ENCODE measurements at regions of chr6 and their contacts with region 1.

Region 1: DNA sequence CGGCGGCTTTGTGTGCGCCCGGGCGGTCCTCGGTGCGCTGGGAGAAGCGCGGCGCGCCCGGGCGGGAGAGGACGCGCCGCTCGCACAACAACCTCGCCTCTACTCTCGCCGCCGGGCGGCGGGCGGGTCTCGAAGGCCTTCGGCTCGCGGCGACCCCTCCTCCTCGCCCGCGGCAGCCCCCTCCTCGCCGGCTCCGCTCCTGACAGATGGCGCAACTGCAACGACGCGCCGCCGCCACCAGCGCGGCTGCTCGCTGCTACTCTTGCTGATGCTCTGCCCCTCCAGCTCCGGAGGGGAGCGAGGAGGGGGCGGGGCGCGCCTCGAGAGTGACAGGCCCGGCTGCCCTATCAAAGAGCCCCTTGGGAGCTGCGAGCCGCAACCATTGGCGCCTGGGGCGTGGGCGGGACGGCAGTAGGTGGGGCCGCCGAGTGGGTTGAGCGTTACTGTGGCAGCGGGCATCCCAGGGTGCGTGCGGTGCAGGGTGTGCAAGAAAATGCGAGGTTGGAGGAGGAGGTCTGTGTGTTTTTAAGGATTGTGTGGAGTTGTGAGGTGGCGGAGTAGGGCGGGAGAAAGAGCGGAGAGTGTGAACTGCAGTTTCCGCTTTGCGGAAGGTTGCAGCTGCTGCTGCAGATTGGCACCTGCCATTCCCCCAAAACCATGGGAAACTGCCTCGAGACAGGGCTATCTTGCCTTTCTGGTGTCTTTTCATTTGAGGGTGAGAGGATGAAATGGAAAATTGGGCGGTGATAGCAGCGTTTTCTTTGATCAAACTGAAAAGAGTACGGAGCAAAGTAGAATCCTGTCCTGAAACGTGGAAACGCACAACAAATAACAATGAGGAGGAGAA is at the start of gene FYN:
- DNase-seq: peak; percentile 97 to 100 (median 99)
- ATAC-seq: peak; percentile 96
- H3K4me3 ChIP-seq: peak within 1 kb of the TSS; percentile 89
- H3K4me3 Mint-ChIP-seq: peak within 1 kb of the TSS; percentile 95 to 100 (median 98)
- H3K27ac ChIP-seq: peak within 1 kb of the TSS; percentile 86
- H3K27ac Mint-ChIP-seq: peak within 1 kb of the TSS; percentile 93 to 99 (median 96)
- H3K4me1 ChIP-seq: peaks cover 32 to 34% of the 10 kb centered on the region in 2 donors
- H3K4me1 Mint-ChIP-seq: peaks cover 22 to 45% (median 38%) of the 10 kb centered on the region in 7 donors
- H3K27me3 ChIP-seq: no peaks in the 10 kb centered on the region
- H3K27me3 Mint-ChIP-seq: no peaks in the 10 kb centered on the region
- total RNA-seq, gene FYN: 200 to 720 (median 447) TPM

Region 2: DNA sequence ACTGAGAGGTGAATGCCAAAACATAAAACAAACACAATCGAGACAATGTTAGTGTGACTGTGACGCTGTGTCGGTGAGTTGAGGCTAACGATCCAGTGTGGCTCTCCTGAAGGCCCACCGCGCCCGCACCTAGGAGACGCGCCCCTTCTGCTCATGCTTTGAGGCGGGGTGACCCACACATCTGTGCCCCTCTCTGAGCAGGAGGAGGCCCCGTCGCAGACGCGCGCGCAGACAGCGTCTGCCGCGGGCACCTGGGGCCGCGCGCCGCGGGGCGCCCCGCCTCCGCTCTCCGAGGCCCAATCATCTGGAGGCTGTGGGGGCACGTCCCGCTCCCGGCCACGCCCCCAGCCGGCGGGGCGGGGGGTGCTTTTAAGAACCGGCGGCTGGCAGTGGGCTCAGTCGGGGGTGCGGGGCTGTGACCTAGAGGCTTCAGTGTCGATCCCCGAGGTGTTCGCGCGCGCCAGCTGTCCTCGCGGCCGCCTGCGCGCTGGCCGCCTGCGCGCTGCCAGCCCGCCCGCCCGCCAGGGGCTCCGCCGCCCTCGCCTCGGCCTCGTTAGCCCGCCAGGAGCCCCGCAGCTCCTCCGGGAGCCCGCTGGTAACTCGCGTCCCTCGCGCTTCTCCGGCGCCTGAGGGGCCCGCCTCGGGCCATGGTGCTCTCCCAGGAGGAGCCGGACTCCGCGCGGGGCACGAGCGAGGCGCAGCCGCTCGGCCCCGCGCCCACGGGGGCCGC is 786.1 kb before region 1 on chr6 and contains the start of gene SLC16A10:
- CTCF ChIA-PET with region 1: no interaction called
- POLR2A ChIA-PET with region 1: no interaction called
- intact Hi-C with region 1: loop called in 1 of 2 experiments (anchors 5 kb)
- DNase-seq: peak; percentile 75 to 92 (median 90)
- ATAC-seq: peak; percentile 95
- H3K4me3 ChIP-seq: peak within 1 kb of the TSS; percentile 83
- H3K4me3 Mint-ChIP-seq: peak within 1 kb of the TSS; percentile 85 to 100 (median 97)
- H3K27ac ChIP-seq: peak within 1 kb of the TSS; percentile 80
- H3K27ac Mint-ChIP-seq: peak within 1 kb of the TSS; percentile 54 to 99 (median 96)
- H3K4me1 ChIP-seq: peaks cover 10 to 17% of the 10 kb centered on the region in 2 donors
- H3K4me1 Mint-ChIP-seq: peaks cover 20 to 54% (median 48%) of the 10 kb centered on the region in 7 donors
- H3K27me3 ChIP-seq: no peaks in the 10 kb centered on the region
- H3K27me3 Mint-ChIP-seq: peaks cover 0 to 24% (median 0%) of the 10 kb centered on the region in 5 donors
- total RNA-seq, gene SLC16A10: 1.6 to 27.7 (median 16.7) TPM

Region 3: DNA sequence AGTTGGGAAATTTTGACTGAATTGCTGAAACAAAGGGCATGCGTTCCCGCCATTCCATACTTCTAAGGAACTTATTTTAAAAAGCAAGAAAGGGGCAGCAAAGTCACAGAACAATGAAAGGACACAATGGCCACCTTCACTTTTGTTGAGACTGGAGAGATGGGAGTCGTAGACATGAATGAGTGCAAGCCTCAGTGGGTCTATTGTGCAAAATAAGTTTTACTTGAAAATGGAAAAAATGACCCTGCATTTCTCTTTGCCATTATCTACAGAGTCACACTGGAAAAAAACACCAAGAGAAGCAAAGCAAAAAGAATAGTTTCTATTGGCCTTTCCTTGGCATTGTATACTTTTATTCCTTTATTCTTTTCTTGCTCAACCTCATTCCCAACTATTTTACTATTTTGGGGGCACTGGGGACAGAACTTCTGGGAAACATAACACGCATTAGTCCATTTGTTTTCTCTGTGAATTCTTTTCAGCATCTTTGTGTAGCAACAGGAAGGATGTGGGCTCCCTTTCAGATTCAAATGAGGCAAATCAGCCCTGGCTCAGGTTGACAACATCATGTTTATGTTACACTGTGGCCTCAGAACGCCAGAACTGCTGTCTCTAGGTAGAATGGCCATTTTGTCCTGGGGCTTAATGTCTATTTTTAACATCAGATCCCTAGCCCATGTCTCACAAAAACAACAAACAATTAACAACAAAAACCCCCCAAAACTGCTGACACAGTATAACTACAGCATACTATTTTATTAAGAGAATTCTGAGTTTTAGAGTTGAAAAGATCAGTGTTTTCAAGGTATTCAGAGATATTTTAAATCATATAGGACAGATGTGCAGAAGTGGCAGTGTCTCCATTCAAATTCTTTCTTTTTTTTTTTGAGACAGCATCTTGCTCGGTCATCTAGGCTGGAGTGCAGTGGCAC is 122.4 kb before region 1 on chr6:
- CTCF ChIA-PET with region 1: interaction called, 3 read pairs
- POLR2A ChIA-PET with region 1: no interaction called
- intact Hi-C with region 1: loop called (anchors 1 to 2 kb)
- DNase-seq: peak in 7 of 9 donors; percentile 72 to 85 (median 81)
- ATAC-seq: peak; percentile 94
- H3K4me3 ChIP-seq: peak overlapping the region; percentile 41
- H3K4me3 Mint-ChIP-seq: peak overlapping the region; percentile 58 to 82 (median 73)
- H3K27ac ChIP-seq: peak overlapping the region; percentile 97
- H3K27ac Mint-ChIP-seq: peak overlapping the region; percentile 93 to 100 (median 98)
- H3K4me1 ChIP-seq: peaks cover 94 to 95% of the 10 kb centered on the region in 2 donors
- H3K4me1 Mint-ChIP-seq: peaks cover 67 to 100% (median 99%) of the 10 kb centered on the region in 7 donors
- H3K27me3 ChIP-seq: no peaks in the 10 kb centered on the region
- H3K27me3 Mint-ChIP-seq: no peaks in the 10 kb centered on the region

Region 4: GRCh38 chr6:111841822-111842221 is 31.6 kb before region 1 on chr6:
- CTCF ChIA-PET with region 1: interaction called, 6 read pairs
- POLR2A ChIA-PET with region 1: interaction called, 8 read pairs
- intact Hi-C with region 1: loop called (anchors 1 kb)
- DNase-seq: peak in 7 of 9 donors; percentile 38 to 63 (median 61)
- ATAC-seq: no peak
- H3K4me3 ChIP-seq: no peak overlapping the region
- H3K4me3 Mint-ChIP-seq: no peak overlapping the region
- H3K27ac ChIP-seq: peak overlapping the region; percentile 62
- H3K27ac Mint-ChIP-seq: no peak overlapping the region
- H3K4me1 ChIP-seq: peaks cover 98 to 100% of the 10 kb centered on the region in 2 donors
- H3K4me1 Mint-ChIP-seq: peaks cover 0 to 55% (median 0%) of the 10 kb centered on the region in 7 donors
- H3K27me3 ChIP-seq: no peaks in the 10 kb centered on the region
- H3K27me3 Mint-ChIP-seq: no peaks in the 10 kb centered on the region

Region 5: GRCh38 chr6:111973118-111973761 is 99.8 kb after region 1 on chr6:
- CTCF ChIA-PET with region 1: interaction called, 4 read pairs
- POLR2A ChIA-PET with region 1: interaction called, 24 read pairs
- intact Hi-C with region 1: loop called (anchors 1 kb)
- DNase-seq: peak; percentile 41 to 92 (median 88)
- ATAC-seq: peak; percentile 90
- H3K4me3 ChIP-seq: peak overlapping the region; percentile 17
- H3K4me3 Mint-ChIP-seq: peak overlapping the region; percentile 55 to 82 (median 67)
- H3K27ac ChIP-seq: peak overlapping the region; percentile 95
- H3K27ac Mint-ChIP-seq: peak overlapping the region; percentile 84 to 99 (median 96)
- H3K4me1 ChIP-seq: peaks cover 7 to 77% of the 10 kb centered on the region in 2 donors
- H3K4me1 Mint-ChIP-seq: peaks cover 37 to 95% (median 82%) of the 10 kb centered on the region in 7 donors
- H3K27me3 ChIP-seq: no peaks in the 10 kb centered on the region
- H3K27me3 Mint-ChIP-seq: peaks cover 0 to 10% (median 0%) of the 10 kb centered on the region in 5 donors

Region 6: DNA sequence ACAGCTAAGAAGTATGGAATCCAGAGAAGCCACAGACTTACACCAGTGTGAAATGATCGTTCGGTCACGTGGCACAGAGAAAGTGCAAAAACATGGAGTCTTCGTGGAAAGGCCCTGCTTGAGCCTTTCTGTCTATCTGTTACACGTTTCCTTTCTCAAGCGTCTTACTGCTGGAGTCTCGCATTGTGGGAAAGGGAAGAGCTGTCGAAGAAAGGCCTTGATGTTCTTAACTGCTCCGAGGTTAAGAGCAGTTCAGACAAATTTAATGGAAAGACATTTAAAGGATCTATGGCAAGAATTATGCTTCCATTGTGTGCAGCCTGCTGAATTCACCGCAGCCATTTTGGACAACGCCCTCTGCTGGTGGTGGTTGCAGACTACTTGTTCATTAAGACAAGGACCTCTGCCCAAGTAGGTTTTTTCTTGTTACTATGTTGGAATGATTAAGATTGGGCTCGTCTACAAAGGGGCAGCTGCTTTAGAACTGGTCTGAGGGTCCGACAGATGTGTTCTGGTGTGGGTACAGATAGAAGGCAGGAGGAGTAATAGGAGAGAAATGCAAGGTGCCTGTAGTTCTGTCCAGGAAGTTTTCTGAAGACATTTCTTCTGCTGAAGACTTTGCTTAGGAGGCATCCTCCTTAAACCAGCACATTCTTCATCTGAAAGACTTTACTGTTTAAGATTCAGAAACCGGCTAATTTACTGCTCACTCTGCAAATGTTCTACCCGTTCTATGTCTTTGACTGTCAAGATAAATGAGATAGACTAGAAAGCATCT is 155.8 kb after region 1 on chr6:
- CTCF ChIA-PET with region 1: interaction called, 5 read pairs
- POLR2A ChIA-PET with region 1: interaction called, 9 read pairs
- intact Hi-C with region 1: loop called in 1 of 2 experiments (anchors 1 kb)
- DNase-seq: peak in 7 of 9 donors; percentile 22 to 58 (median 43)
- ATAC-seq: no peak
- H3K4me3 ChIP-seq: no peak overlapping the region
- H3K4me3 Mint-ChIP-seq: peak overlapping the region; percentile 49 to 83 (median 68)
- H3K27ac ChIP-seq: peak overlapping the region; percentile 90
- H3K27ac Mint-ChIP-seq: peak overlapping the region; percentile 95 to 100 (median 98)
- H3K4me1 ChIP-seq: peaks cover 34 to 74% of the 10 kb centered on the region in 2 donors
- H3K4me1 Mint-ChIP-seq: peaks cover 46 to 94% (median 84%) of the 10 kb centered on the region in 7 donors
- H3K27me3 ChIP-seq: no peaks in the 10 kb centered on the region
- H3K27me3 Mint-ChIP-seq: peaks cover 0 to 3% (median 0%) of the 10 kb centered on the region in 5 donors